CD4-positive, alpha-beta memory T cell (primary cell): ENCODE measurements at regions of chrX and their contacts with region 1.

Region 1: DNA sequence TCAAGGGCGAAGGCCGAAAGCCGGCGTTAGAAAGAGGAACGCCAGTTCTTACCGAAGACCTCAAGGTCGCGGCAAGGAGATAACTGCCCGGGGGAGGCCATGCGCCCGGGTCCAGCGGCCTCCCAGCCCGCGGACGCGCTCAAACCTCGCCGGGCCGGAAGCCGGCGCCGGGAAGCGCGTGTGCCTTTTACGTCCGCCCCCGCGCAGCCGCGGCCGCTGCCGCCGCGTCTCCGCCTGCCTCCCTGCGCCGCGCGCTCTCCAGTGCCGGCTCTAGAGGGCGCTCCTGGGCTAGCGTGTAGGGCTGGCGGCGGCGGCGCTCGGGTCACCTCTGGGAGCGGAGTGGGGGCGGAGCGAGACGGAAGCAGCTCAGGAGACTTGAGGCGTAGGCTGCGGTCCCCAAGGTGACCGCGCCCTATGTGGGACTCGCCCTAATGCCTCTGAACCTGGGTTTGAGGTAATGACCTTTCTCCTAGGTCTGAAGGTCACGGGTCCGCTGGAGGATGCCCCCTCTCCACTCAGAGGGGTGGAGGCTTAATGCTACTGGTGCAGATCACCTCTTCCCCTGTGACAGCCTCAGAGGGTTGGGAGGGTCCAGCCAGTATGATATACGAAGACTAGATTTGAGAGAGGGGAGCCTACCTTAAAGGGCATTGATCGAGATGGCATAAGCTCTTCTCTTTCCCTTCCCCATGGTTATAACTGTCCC is 839 bp downstream of the SLC25A5 start:
- DNase-seq: peak; percentile 85 to 88 (median 87)
- H3K4me3 ChIP-seq: peak overlapping the region; percentile 61 to 76
- H3K4me3 Mint-ChIP-seq: peak overlapping the region; percentile 85 to 92 (median 86)
- H3K27ac ChIP-seq: peak overlapping the region; percentile 93
- H3K27ac Mint-ChIP-seq: peak overlapping the region; percentile 89 to 97 (median 96)
- H3K4me1 ChIP-seq: peaks cover 17% of the 10 kb centered on the region
- H3K4me1 Mint-ChIP-seq: peaks cover 4 to 11% (median 7%) of the 10 kb centered on the region in 4 donors
- H3K27me3 ChIP-seq: no peaks in the 10 kb centered on the region
- H3K27me3 Mint-ChIP-seq: no peaks in the 10 kb centered on the region

Region 2: GRCh38 chrX:118345401-118346257 is 1123.5 kb before region 1 on chrX and contains the start of gene WDR44:
- CTCF ChIA-PET with region 1: no interaction called
- POLR2A ChIA-PET with region 1: no interaction called
- intact Hi-C with region 1: loop called (anchors 5 kb)
- DNase-seq: peak; percentile 88 to 95 (median 94)
- H3K4me3 ChIP-seq: peak within 1 kb of the TSS; percentile 76 to 85
- H3K4me3 Mint-ChIP-seq: peak within 1 kb of the TSS; percentile 97 to 100 (median 99)
- H3K27ac ChIP-seq: peak within 1 kb of the TSS; percentile 84
- H3K27ac Mint-ChIP-seq: peak within 1 kb of the TSS; percentile 97 to 100 (median 98)
- H3K4me1 ChIP-seq: peaks cover 38% of the 10 kb centered on the region
- H3K4me1 Mint-ChIP-seq: peaks cover 16 to 51% (median 27%) of the 10 kb centered on the region in 4 donors
- H3K27me3 ChIP-seq: no peaks in the 10 kb centered on the region
- H3K27me3 Mint-ChIP-seq: no peaks in the 10 kb centered on the region
- total RNA-seq, gene WDR44: 20.5 to 24.1 TPM

Region 3: GRCh38 chrX:119235872-119236622 is 233.0 kb before region 1 on chrX and contains the start of gene PGRMC1:
- CTCF ChIA-PET with region 1: no interaction called
- POLR2A ChIA-PET with region 1: no interaction called
- intact Hi-C with region 1: loop called (anchors 2 kb)
- DNase-seq: peak; percentile 80 to 85 (median 84)
- H3K4me3 ChIP-seq: peak within 1 kb of the TSS; percentile 61 to 68
- H3K4me3 Mint-ChIP-seq: peak within 1 kb of the TSS; percentile 86 to 92 (median 90)
- H3K27ac ChIP-seq: peak within 1 kb of the TSS; percentile 52
- H3K27ac Mint-ChIP-seq: peak within 1 kb of the TSS; percentile 71 to 91 (median 83)
- H3K4me1 ChIP-seq: peaks cover 22% of the 10 kb centered on the region
- H3K4me1 Mint-ChIP-seq: peaks cover 9 to 38% (median 17%) of the 10 kb centered on the region in 4 donors
- H3K27me3 ChIP-seq: no peaks in the 10 kb centered on the region
- H3K27me3 Mint-ChIP-seq: no peaks in the 10 kb centered on the region
- total RNA-seq, gene PGRMC1: 15.9 to 17.2 TPM

Region 4: GRCh38 chrX:119382606-119383005 is 86.5 kb before region 1 on chrX:
- CTCF ChIA-PET with region 1: no interaction called
- POLR2A ChIA-PET with region 1: no interaction called
- intact Hi-C with region 1: no loop called
- DNase-seq: no peak
- H3K4me3 ChIP-seq: no peak overlapping the region
- H3K4me3 Mint-ChIP-seq: no peak overlapping the region
- H3K27ac ChIP-seq: no peak overlapping the region
- H3K27ac Mint-ChIP-seq: no peak overlapping the region
- H3K4me1 ChIP-seq: no peaks in the 10 kb centered on the region
- H3K4me1 Mint-ChIP-seq: no peaks in the 10 kb centered on the region
- H3K27me3 ChIP-seq: no peaks in the 10 kb centered on the region
- H3K27me3 Mint-ChIP-seq: no peaks in the 10 kb centered on the region

Region 5: DNA sequence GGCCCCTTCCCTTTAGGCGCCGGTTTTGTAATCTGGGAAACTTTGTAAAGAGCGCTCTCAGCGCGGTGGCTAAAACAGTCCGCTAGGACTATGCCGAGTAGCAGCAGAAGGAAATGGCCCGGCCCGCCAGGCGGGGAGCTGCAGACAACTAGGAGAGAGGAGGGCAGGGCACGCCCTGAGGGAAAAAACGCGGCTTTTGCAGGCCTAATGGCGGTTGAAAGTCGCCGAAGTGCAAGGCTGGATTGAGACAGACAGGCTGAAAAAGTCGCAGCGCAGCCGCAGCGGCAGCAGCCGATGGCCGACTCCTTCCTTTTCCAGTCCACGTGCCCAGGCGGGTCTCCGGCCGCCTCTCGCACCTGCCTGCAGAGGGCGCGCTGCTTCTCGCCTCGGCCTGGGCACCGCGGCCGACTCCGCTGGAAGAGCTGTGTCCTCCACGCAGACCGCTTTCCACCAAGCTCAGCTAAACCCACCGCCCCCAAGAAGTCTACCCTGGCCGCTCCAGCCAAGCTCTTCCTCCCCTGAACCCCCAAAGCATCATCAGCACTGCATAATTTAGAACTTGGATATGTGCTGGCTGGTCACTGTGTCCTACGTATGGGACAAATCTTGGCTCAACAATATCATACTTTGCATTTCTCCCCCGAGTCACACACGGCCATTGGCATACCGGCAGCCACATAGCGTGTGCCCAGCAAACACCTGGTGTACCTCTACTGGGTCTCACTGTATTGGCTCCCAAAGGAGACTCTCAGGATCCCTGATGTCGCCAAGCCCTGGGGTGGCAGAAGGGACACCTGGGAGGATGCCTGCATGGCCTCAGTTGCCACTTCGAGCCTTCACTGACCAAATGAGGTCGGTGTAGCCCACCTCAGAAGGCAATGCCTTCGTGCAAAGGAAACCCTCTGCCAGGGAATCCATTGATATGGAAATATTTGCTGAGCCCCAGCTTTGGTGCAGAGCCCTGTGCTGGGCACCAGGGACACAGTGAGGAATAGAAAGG is 13.7 kb after region 1 on chrX:
- CTCF ChIA-PET with region 1: interaction called, 37 read pairs
- POLR2A ChIA-PET with region 1: interaction called, 23 read pairs
- intact Hi-C with region 1: loop called (anchors 1 kb)
- DNase-seq: peak; percentile 52 to 64 (median 60)
- H3K4me3 ChIP-seq: peak overlapping the region; percentile 12 to 43
- H3K4me3 Mint-ChIP-seq: peak overlapping the region; percentile 78 to 87 (median 84)
- H3K27ac ChIP-seq: peak overlapping the region; percentile 12
- H3K27ac Mint-ChIP-seq: peak overlapping the region; percentile 30 to 84 (median 83)
- H3K4me1 ChIP-seq: peaks cover 5% of the 10 kb centered on the region
- H3K4me1 Mint-ChIP-seq: peaks cover 1 to 10% (median 7%) of the 10 kb centered on the region in 4 donors
- H3K27me3 ChIP-seq: no peaks in the 10 kb centered on the region
- H3K27me3 Mint-ChIP-seq: no peaks in the 10 kb centered on the region

Region 6: GRCh38 chrX:120603707-120604360 is 1134.8 kb after region 1 on chrX and contains the start of gene MCTS1:
- CTCF ChIA-PET with region 1: no interaction called
- POLR2A ChIA-PET with region 1: no interaction called
- intact Hi-C with region 1: loop called (anchors 2 kb)
- DNase-seq: peak; percentile 78 to 93 (median 86)
- H3K4me3 ChIP-seq: peak within 1 kb of the TSS; percentile 55 to 77
- H3K4me3 Mint-ChIP-seq: peak within 1 kb of the TSS; percentile 90 to 98 (median 94)
- H3K27ac ChIP-seq: peak within 1 kb of the TSS; percentile 85
- H3K27ac Mint-ChIP-seq: peak within 1 kb of the TSS; percentile 95 to 99 (median 98)
- H3K4me1 ChIP-seq: peaks cover 17% of the 10 kb centered on the region
- H3K4me1 Mint-ChIP-seq: peaks cover 6 to 14% (median 8%) of the 10 kb centered on the region in 4 donors
- H3K27me3 ChIP-seq: no peaks in the 10 kb centered on the region
- H3K27me3 Mint-ChIP-seq: no peaks in the 10 kb centered on the region
- total RNA-seq, gene MCTS1: 29.1 to 33.3 TPM